ENCODE measurements at regions of chr5 and their contacts with region 1.

Region 1: DNA sequence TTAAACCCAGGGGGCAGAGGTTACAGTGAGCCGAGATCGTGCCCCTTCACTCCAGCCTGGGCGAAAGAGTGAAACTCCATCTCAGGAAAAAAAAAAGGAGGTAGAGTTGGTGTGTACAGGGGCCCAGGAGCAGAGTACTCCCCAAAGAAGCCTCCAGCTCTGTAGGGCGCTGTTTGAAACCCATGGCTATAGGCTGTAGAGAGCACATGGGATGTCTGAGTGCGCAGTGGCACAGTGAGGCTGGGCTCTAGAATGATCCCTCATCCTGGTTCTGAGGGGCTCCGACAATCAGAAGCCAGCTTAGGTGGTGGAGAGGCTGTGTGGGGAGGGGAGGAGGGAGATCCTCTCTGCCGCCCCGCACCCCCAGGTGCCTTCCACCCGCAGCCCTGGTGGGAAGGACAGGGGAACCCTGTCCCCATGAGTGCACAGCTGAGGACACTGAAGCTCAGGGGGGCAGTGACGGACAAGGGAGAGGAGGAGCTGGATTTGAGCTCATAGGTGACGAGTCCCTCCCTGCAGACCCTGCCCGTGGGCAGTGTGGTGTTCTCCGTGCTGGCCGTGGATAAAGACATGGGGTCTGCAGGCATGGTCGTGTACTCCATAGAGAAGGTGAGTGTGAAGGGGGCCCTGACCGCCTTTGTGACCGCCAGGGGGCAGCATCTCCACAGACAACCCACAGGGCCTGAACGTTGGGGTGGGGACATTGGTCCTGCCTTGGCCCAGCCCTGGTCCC is 24.6 kb downstream of the CDHR2 start:
- DNase-seq: peak; percentile 81
- H3K4me3 Mint-ChIP-seq: no peak overlapping the region
- H3K27ac Mint-ChIP-seq: no peak overlapping the region
- H3K4me1 Mint-ChIP-seq: peaks cover 3% of the 10 kb centered on the region
- H3K27me3 Mint-ChIP-seq: no peaks in the 10 kb centered on the region

Region 2: DNA sequence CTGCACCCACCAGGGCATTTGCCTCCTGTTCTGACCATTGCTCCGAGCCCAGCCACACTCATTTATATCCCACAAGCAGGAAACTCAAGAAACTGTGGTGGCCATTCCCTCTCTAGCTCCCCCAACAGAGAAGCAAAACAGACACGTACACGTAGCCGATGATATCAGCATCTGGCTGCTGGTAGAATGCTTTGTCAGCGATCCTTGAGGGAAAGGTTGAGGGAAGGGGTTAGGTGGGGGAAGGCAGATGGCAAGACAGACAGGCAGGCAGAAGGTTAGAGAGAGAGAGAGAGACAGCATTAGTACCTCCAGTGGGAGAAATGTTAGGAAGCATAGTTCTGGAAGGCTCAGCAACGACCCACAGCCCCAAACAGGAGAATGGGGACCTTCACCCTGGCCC is 177.4 kb before region 1 on chr5:
- CTCF ChIA-PET with region 1: no interaction called
- intact Hi-C with region 1: no loop called
- DNase-seq: no peak
- H3K4me3 Mint-ChIP-seq: no peak overlapping the region
- H3K27ac Mint-ChIP-seq: no peak overlapping the region
- H3K4me1 Mint-ChIP-seq: no peaks in the 10 kb centered on the region
- H3K27me3 Mint-ChIP-seq: no peaks in the 10 kb centered on the region

Region 3: DNA sequence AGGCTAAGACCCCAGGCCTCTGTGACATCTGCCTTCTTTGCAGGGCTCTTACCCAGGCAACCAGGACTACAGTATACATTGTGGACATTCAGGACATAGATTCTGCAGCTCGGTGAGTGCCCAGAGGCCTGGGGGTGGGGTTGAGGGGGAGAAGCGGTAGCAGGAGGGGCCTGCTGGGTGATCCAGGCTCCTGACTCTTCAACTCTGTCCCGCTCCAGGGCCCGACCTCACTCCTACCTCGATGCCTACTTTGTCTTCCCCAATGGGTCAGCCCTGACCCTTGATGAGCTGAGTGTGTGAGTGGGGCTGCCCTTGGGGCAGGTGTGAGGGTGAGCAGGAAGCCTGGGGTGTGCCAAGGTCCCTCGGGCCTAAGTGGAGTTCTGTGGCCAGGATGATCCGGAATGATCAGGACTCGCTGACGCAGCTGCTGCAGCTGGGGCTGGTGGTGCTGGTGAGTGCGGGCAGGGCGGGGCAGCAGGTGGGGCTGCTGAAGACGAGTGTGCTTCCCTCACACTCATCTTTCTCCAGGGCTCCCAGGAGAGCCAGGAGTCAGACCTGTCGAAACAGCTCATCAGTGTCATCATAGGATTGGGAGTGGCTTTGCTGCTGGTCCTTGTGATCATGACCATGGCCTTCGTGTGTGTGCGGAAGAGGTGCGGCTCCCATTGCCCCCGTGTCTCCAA is 16.4 kb after region 1 on chr5:
- CTCF ChIA-PET with region 1: interaction called, 10 read pairs
- intact Hi-C with region 1: no loop called
- DNase-seq: no peak
- H3K4me3 Mint-ChIP-seq: no peak overlapping the region
- H3K27ac Mint-ChIP-seq: no peak overlapping the region
- H3K4me1 Mint-ChIP-seq: no peaks in the 10 kb centered on the region
- H3K27me3 Mint-ChIP-seq: no peaks in the 10 kb centered on the region

Region 4: DNA sequence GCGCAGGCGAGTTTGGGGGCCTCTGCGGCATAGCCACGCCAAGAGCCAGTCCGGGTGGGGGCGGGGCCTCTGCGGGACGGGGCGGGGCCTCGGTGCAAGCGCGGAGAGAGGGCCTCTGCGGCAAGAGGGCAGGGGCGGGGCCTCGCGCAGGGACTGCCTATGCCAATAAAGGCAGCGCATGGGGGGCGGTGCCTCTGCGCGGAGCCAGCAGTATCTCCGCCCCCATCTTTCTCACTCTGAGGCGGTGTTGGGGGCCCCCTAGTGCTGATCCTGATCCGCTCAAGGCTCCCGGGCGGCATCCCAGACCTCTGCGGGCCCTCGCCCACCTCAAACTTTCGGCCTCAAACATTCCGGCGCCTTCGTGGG is 45.5 kb after region 1 on chr5:
- CTCF ChIA-PET with region 1: interaction called, 4 read pairs
- intact Hi-C with region 1: loop called (anchors 1 kb)
- DNase-seq: peak; percentile 89
- H3K4me3 Mint-ChIP-seq: peak overlapping the region; percentile 48
- H3K27ac Mint-ChIP-seq: no peak overlapping the region
- H3K4me1 Mint-ChIP-seq: peaks cover 18% of the 10 kb centered on the region
- H3K27me3 Mint-ChIP-seq: peaks cover 48% of the 10 kb centered on the region

Measured in activated naive CD4-positive, alpha-beta T cell treated with anti-CD3 and anti-CD28 coated beads for 36 hours (primary cell).